ENCODE measurements at regions of chr17 and their contacts with region 1.

Region 1: GRCh38 chr17:75872434-75873351 is 5.7 kb downstream of the TRIM47 start:
- DNase-seq: peak; percentile 76
- H3K4me3 ChIP-seq: no peak overlapping the region
- H3K27ac ChIP-seq: peak overlapping the region; percentile 83
- H3K4me1 ChIP-seq: peaks cover 28% of the 10 kb centered on the region
- H3K27me3 ChIP-seq: no peaks in the 10 kb centered on the region
- CTCF ChIP-seq: peak in 1 of 4 experiments; percentile 4
- POLR2A ChIP-seq: peak; percentile 31

Region 2: GRCh38 chr17:75855310-75856081 is 17.2 kb before region 1 on chr17 and contains the start of gene WBP2:
- intact Hi-C with region 1: loop called (anchors 2 kb)
- DNase-seq: peak; percentile 100
- H3K4me3 ChIP-seq: peak within 1 kb of the TSS; percentile 72 to 89
- H3K27ac ChIP-seq: peak within 1 kb of the TSS; percentile 98
- H3K4me1 ChIP-seq: peaks cover 8% of the 10 kb centered on the region
- H3K27me3 ChIP-seq: no peaks in the 10 kb centered on the region
- CTCF ChIP-seq: peak; percentile 31 to 92 (median 50)
- POLR2A ChIP-seq: peak; percentile 99
- total RNA-seq, gene WBP2: 88.9 to 125 TPM

Region 3: DNA sequence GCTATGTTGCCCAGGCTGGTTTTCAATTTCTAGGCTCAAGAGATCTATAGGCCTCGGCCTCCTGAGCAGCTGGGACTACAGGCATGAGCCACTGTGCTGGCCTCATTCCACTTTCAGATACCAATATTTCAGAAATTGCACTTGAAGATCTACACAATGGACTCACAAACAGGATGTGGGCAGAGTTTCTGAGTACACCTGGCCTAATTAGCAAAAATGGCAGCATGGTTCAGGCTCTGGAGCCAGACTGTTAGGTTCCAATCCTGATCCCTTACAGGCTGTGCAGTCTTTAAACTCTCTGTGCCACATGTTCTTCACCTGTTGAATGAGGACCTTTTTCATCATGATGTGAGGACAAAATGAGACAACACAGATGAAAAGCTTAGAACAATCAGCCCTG is 335.4 kb after region 1 on chr17:
- intact Hi-C with region 1: no loop called
- DNase-seq: no peak
- H3K4me3 ChIP-seq: no peak overlapping the region
- H3K27ac ChIP-seq: no peak overlapping the region
- H3K4me1 ChIP-seq: no peaks in the 10 kb centered on the region
- H3K27me3 ChIP-seq: no peaks in the 10 kb centered on the region
- CTCF ChIP-seq: no peak
- POLR2A ChIP-seq: no peak

Measured in prostate gland (tissue), 2 donors.